ENCODE measurements at regions of chr19 and their contacts with region 1.

Region 1: GRCh38 chr19:47247329-47247886 is 8.9 kb upstream of the CCDC9 start:
- DNase-seq: peak; percentile 88
- ATAC-seq: no peak

Region 2: DNA sequence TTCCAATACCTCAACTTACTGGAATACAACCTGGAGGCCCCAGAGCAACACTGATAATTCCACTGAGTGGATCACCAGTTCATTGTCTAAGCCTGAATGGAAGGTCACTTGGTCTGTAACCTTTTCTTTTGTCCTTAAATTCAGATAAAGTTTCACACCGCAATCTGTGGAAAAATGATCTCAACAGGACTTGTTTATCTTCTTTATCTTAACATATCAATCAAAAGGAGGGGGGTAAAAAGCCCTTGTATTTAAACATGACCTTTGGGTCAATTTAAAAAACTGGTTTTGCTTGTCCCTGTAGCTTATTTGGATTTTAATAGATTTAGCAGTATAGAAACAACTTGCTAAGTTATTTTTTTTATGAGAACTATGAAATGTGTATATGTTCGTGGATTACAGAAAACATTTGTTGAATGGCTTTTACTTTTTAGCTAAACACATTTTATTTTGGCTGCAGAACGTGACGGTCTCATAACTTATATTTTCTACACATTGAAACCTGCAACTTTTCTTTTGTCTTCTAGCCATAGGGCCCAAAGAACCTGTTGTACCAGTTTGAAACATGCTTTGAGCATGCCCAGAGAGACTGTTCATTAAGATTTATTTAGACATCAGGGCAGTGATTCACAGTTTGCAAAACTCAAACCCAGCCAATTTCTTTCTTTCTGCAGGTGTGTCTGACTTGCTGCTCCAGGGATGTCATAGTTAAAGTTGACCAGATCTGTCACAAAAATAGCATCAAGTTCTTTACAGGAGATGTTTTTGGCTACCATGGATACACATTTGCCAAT is 95.0 kb before region 1 on chr19:
- intact Hi-C with region 1: loop called (anchors 5 kb)
- DNase-seq: no peak
- ATAC-seq: no peak

Measured in left ventricle myocardium superior (tissue), 1 donor.